ENCODE measurements at regions of chr3 and their contacts with region 1.

Region 1: GRCh38 chr3:177126015-177126773 is 71.1 kb downstream of the TBL1XR1 start:
- DNase-seq: no peak
- ATAC-seq: peak; percentile 79 to 95

Region 2: GRCh38 chr3:177345049-177345972 is 219.1 kb after region 1 on chr3:
- intact Hi-C with region 1: loop called in 1 of 2 experiments (anchors 5 kb)
- DNase-seq: peak; percentile 88
- ATAC-seq: peak; percentile 99

Region 3: GRCh38 chr3:177781686-177782161 is 655.5 kb after region 1 on chr3:
- intact Hi-C with region 1: no loop called
- DNase-seq: peak; percentile 55
- ATAC-seq: peak; percentile 92 to 95